ENCODE measurements at regions of chr6 and their contacts with region 1.

Region 1: GRCh38 chr6:156776840-156777576 is at the start of gene ARID1B:
- DNase-seq: peak; percentile 92
- ATAC-seq: peak; percentile 80
- total RNA-seq, gene ARID1B: 46.6 TPM

Region 2: GRCh38 chr6:156564127-156564806 is 212.7 kb before region 1 on chr6:
- intact Hi-C with region 1: loop called (anchors 10 kb)
- DNase-seq: peak; percentile 88
- ATAC-seq: peak; percentile 97

Region 3: GRCh38 chr6:156686995-156687788 is 89.8 kb before region 1 on chr6:
- intact Hi-C with region 1: loop called (anchors 5 kb)
- DNase-seq: peak; percentile 95
- ATAC-seq: peak; percentile 97

Region 4: GRCh38 chr6:157019733-157020132 is 242.7 kb after region 1 on chr6:
- intact Hi-C with region 1: loop called (anchors 10 kb)
- DNase-seq: no peak
- ATAC-seq: no peak

Measured in left ventricle myocardium superior (tissue), 1 donor.